Ascending aorta (tissue), 2 donors: ENCODE measurements at regions of chr9 and their contacts with region 1.

Region 1: DNA sequence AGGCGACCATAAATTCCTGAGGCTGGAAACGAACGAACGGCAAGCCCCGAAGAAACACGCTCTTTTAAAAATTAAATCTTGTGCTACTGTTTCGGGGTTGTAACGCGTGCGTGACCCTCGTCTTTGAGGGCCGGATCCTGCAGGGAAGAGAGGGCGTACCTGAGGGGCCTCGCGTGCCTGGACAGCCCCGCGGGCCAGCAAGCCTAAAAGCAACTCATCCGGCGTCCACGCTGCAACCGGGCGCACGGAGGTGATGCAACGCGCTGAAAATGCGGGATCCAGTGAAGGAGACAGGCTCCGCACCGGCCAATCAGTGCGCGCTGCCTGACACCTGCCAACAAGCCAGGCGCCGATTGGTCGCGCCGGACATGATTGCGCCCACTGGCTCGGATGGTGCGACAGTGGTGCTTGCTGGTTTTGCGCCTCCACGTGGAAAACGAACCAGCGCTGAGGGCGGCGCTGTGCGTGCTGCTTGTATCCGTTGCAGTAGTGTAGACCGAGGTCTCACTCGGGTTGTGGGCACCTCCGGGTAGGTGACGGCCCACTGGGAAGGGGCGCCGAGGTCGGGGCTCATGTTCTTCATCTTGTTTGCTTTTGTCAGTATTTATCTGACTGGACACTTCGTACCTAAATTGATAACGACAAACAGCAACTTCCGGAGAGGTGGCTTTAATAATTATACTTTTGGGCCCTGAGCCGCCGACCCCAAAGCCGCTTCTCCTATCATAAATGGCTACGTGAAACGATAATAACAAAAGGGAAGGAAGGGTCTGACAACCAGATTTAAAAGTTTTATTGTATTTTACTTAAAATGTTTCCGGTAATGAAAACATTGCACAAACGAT is at the start of gene IARS1:
- DNase-seq: peak; percentile 96 to 100
- H3K4me3 ChIP-seq: peak within 1 kb of the TSS; percentile 64 to 80
- H3K27ac ChIP-seq: peak within 1 kb of the TSS; percentile 54 to 67
- H3K4me1 ChIP-seq: peaks cover 8 to 12% of the 10 kb centered on the region in 2 donors
- H3K27me3 ChIP-seq: no peaks in the 10 kb centered on the region
- CTCF ChIP-seq: peak in 1 of 3 experiments; percentile 33
- total RNA-seq, gene IARS1: 44.4 TPM

Region 2: DNA sequence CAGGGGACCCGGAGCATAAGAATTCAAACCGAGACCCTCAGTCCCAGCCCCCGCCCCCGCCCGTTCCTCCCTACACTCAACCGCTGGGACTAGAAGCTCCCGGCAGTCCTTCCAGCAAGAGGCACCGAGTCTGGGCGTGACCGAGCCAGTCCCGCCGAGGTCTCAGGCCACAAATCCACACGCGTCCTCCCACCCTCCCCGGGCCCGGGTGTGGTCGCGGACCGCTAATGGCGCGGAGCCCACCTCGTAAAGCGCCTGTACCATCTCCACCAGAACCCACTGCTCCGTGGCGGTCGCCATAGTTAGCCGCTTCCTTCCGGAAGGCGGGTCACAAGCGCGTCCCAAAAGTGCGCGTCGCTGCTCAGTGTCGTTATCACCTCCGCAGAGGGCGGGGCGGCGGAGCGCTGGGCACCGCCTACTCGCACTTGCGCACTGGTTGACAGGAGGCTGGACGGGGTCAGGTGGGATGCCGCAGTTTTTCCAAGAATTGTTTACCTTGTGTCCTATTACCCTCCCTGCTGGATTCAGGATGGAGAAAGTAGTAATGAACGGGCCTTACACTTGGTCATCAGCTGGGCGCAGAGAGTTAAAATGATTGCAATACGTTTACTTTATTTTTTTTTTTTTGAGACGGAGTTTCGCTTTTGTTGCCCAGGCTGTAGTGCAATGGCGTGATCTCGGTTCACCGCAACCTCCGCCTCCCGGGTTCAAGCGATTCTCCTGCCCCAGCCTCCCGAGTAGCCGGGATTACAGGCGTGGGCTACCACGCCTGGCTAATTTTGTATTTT is 178.4 kb before region 1 on chr9 and contains the start of gene SPTLC1:
- intact Hi-C with region 1: loop called (anchors 1 kb)
- DNase-seq: peak; percentile 79 to 96
- H3K4me3 ChIP-seq: peak within 1 kb of the TSS; percentile 83 to 88
- H3K27ac ChIP-seq: peak within 1 kb of the TSS; percentile 82 to 88
- H3K4me1 ChIP-seq: peaks cover 3 to 6% of the 10 kb centered on the region in 2 donors
- H3K27me3 ChIP-seq: no peaks in the 10 kb centered on the region
- CTCF ChIP-seq: no peak
- total RNA-seq, gene SPTLC1: 48.0 TPM

Region 3: GRCh38 chr9:92140074-92140753 is 153.5 kb before region 1 on chr9:
- intact Hi-C with region 1: loop called (anchors 2 kb)
- DNase-seq: peak in 1 of 2 donors; percentile 89
- H3K4me3 ChIP-seq: peak overlapping the region; percentile 53 to 63
- H3K27ac ChIP-seq: no peak overlapping the region
- H3K4me1 ChIP-seq: peaks cover 0 to 6% of the 10 kb centered on the region in 2 donors
- H3K27me3 ChIP-seq: no peaks in the 10 kb centered on the region
- CTCF ChIP-seq: peak; percentile 68 to 93 (median 91)

Region 4: GRCh38 chr9:92223758-92224157 is 69.9 kb before region 1 on chr9:
- intact Hi-C with region 1: no loop called
- DNase-seq: no peak
- H3K4me3 ChIP-seq: no peak overlapping the region
- H3K27ac ChIP-seq: no peak overlapping the region
- H3K4me1 ChIP-seq: no peaks in the 10 kb centered on the region
- H3K27me3 ChIP-seq: no peaks in the 10 kb centered on the region
- CTCF ChIP-seq: no peak

Region 5: GRCh38 chr9:92325269-92325990 is 31.8 kb after region 1 on chr9 and contains the starts of genes CENPP and NOL8:
- intact Hi-C with region 1: loop called (anchors 1 kb)
- DNase-seq: peak; percentile 42 to 92
- H3K4me3 ChIP-seq: peak within 1 kb of the TSS; percentile 75 to 80
- H3K27ac ChIP-seq: peak within 1 kb of the TSS; percentile 93 to 97
- H3K4me1 ChIP-seq: peaks cover 0 to 16% of the 10 kb centered on the region in 2 donors
- H3K27me3 ChIP-seq: no peaks in the 10 kb centered on the region
- CTCF ChIP-seq: no peak
- total RNA-seq, gene CENPP: 0.43 TPM
- total RNA-seq, gene NOL8: 11.5 TPM